ENCODE measurements at regions of chr17 and their contacts with region 1.

Region 1: DNA sequence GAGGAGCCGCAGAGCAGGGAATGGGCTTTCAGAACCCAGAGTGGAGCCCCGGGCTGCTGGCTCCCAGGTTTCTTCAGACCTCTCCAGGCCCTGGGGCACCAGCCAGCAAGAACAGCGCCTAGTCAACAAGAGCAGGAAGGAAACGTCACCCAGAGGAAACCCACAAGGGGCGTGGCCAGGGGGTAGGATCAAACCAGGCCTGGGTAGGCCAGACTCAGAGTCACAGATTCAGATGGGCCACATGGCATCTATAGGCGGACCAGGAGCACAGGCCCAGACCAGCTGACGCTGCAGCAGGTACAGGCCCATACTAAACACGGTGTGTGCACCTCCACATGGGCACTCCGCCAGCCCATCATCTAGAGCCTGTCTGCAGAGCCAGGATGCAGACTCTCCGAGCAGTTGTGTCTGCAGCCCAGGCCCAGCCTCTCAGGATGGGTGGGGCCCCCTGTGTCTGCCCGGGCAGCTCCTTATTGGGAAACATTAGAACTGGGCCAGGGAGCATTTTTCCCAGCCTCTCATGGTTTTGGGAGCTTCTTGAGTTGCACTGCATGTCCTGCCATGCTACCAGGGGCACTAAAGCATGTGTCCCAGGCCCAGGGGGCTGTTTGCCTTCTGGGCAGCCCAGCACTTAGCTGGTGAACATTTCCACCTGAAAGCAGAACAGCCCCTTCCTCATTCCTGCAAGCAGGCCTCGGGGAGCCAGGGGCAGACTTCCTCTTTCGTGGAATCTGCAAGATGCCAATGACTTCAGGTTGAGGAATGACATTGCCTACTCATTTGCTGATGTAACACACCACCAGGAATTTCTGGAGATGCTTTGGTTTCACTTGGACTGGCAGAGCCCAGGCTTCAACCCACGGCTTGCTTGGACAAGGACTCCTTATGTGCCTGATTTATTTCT is at the start of gene NLRP1:
- DNase-seq: peak; percentile 94 to 99 (median 95)
- H3K4me3 ChIP-seq: peak within 1 kb of the TSS; percentile 65 to 99
- H3K4me3 Mint-ChIP-seq: peak within 1 kb of the TSS; percentile 95 to 98 (median 97)
- H3K27ac ChIP-seq: peak within 1 kb of the TSS; percentile 88
- H3K27ac Mint-ChIP-seq: peak within 1 kb of the TSS; percentile 95 to 99 (median 98)
- H3K4me1 ChIP-seq: peaks cover 70% of the 10 kb centered on the region
- H3K4me1 Mint-ChIP-seq: peaks cover 41 to 86% (median 63%) of the 10 kb centered on the region in 4 donors
- H3K27me3 ChIP-seq: no peaks in the 10 kb centered on the region
- H3K27me3 Mint-ChIP-seq: no peaks in the 10 kb centered on the region
- total RNA-seq, gene NLRP1: 280 to 292 TPM

Region 2: DNA sequence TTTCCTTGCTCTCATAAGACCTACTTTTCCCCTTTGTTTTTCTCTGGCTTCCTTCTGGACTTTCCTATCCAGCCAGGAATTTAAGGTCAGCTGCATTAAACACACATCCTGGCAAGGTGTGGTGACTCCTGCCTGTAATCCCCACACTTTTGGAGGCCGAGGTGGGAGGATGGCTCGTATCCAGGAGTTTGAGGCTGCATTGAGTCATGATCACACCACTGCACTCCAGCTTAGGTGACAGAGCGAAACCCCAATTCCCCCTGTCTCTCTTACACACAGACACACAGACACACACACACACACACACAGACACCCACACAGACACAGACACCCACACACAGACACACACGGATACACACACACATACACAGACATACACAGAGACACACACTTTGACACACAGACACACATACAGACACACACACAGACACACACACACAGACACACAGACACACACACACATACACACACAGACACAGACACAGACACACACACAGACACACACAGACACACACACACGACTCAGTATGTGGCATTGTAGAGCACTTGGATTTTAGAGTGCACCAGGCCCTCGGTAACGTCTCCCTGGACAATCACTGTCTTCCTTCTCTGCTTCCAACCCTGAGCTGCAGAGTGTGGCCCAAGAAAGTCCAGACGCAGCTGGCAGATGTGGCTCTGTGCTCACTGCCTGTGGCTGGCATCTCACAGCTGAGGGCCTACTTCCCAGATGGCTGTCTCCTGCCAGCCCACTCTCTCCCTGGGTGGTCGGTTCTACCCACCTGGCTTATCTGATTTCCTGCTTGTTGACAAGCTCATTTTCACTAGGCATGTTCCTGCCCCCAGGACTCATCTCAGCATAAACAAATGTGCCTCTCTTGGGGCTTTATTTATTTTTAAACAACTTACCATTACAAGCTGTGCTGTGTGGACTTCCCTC is 39.3 kb before region 1 on chr17:
- CTCF ChIA-PET with region 1: no interaction called
- POLR2A ChIA-PET with region 1: no interaction called
- intact Hi-C with region 1: no loop called
- DNase-seq: no peak
- H3K4me3 ChIP-seq: no peak overlapping the region
- H3K4me3 Mint-ChIP-seq: no peak overlapping the region
- H3K27ac ChIP-seq: no peak overlapping the region
- H3K27ac Mint-ChIP-seq: peak overlapping the region in 6 of 7 donors; percentile 2 to 89 (median 28)
- H3K4me1 ChIP-seq: no peaks in the 10 kb centered on the region
- H3K4me1 Mint-ChIP-seq: peaks cover 9 to 23% (median 15%) of the 10 kb centered on the region in 4 donors
- H3K27me3 ChIP-seq: no peaks in the 10 kb centered on the region
- H3K27me3 Mint-ChIP-seq: no peaks in the 10 kb centered on the region

Region 3: DNA sequence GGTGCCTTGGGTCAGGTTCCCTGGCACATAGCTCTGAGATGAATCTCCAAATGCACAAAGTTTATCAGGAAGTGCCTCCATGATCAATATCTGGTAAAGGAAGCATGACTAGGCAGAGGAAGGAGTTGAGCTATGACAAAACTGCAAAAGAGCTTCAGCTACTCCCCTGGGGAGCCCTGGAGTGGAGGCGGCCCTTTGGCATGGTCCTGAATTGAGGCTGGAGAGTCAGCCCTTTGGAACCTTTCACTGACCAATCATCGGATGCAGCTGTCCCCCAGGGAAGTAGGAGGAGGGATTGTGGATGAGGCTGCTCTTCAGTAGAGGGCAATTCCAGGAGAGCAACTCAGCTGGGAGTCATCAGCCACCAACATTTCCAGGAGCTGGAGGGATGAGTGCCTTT is 45.8 kb after region 1 on chr17:
- CTCF ChIA-PET with region 1: no interaction called
- POLR2A ChIA-PET with region 1: no interaction called
- intact Hi-C with region 1: no loop called
- DNase-seq: no peak
- H3K4me3 ChIP-seq: no peak overlapping the region
- H3K4me3 Mint-ChIP-seq: no peak overlapping the region
- H3K27ac ChIP-seq: no peak overlapping the region
- H3K27ac Mint-ChIP-seq: no peak overlapping the region
- H3K4me1 ChIP-seq: no peaks in the 10 kb centered on the region
- H3K4me1 Mint-ChIP-seq: peaks cover 0 to 1% (median 0%) of the 10 kb centered on the region in 4 donors
- H3K27me3 ChIP-seq: no peaks in the 10 kb centered on the region
- H3K27me3 Mint-ChIP-seq: peaks cover 25 to 29% of the 10 kb centered on the region in 2 donors

Region 4: DNA sequence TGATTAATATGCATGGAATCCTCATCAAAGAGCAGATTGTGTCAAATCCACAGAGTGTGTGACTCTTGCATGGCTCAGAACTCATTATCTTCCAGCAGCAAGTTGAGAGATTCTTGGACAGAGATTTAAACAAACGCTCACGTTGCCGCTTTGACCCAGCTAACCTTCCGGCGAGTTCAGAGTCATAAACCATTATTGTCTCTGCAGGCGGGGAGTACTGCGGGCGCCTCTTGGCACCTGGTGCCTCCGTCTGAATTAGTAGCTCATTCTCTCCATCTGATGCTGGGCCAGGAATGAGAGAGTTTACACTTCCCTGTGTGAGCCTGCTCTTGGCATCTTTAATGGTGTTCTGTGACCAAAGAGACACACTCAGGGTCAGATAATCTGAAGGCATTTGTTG is 347.0 kb after region 1 on chr17:
- CTCF ChIA-PET with region 1: no interaction called
- POLR2A ChIA-PET with region 1: no interaction called
- intact Hi-C with region 1: no loop called
- DNase-seq: no peak
- H3K4me3 ChIP-seq: no peak overlapping the region
- H3K4me3 Mint-ChIP-seq: no peak overlapping the region
- H3K27ac ChIP-seq: no peak overlapping the region
- H3K27ac Mint-ChIP-seq: no peak overlapping the region
- H3K4me1 ChIP-seq: no peaks in the 10 kb centered on the region
- H3K4me1 Mint-ChIP-seq: no peaks in the 10 kb centered on the region
- H3K27me3 ChIP-seq: peaks cover 6% of the 10 kb centered on the region
- H3K27me3 Mint-ChIP-seq: peaks cover 13 to 17% of the 10 kb centered on the region in 2 donors

Region 5: GRCh38 chr17:6421700-6422604 is 837.3 kb after region 1 on chr17:
- CTCF ChIA-PET with region 1: interaction called, 20 read pairs
- POLR2A ChIA-PET with region 1: interaction called, 4 read pairs
- intact Hi-C with region 1: loop called (anchors 1 kb)
- DNase-seq: peak; percentile 53 to 62 (median 57)
- H3K4me3 ChIP-seq: no peak overlapping the region
- H3K4me3 Mint-ChIP-seq: no peak overlapping the region
- H3K27ac ChIP-seq: no peak overlapping the region
- H3K27ac Mint-ChIP-seq: peak overlapping the region in 1 of 7 donors; percentile 42
- H3K4me1 ChIP-seq: peaks cover 7% of the 10 kb centered on the region
- H3K4me1 Mint-ChIP-seq: peaks cover 2 to 11% (median 7%) of the 10 kb centered on the region in 4 donors
- H3K27me3 ChIP-seq: peaks cover 4% of the 10 kb centered on the region
- H3K27me3 Mint-ChIP-seq: peaks cover 2 to 14% of the 10 kb centered on the region in 2 donors

Region 6: GRCh38 chr17:6435968-6436367 is 851.3 kb after region 1 on chr17:
- CTCF ChIA-PET with region 1: interaction called, 59 read pairs
- POLR2A ChIA-PET with region 1: interaction called, 3 read pairs
- intact Hi-C with region 1: loop called (anchors 1 kb)
- DNase-seq: peak; percentile 52 to 67 (median 58)
- H3K4me3 ChIP-seq: no peak overlapping the region
- H3K4me3 Mint-ChIP-seq: no peak overlapping the region
- H3K27ac ChIP-seq: no peak overlapping the region
- H3K27ac Mint-ChIP-seq: no peak overlapping the region
- H3K4me1 ChIP-seq: no peaks in the 10 kb centered on the region
- H3K4me1 Mint-ChIP-seq: peaks cover 0 to 4% (median 0%) of the 10 kb centered on the region in 4 donors
- H3K27me3 ChIP-seq: peaks cover 4% of the 10 kb centered on the region
- H3K27me3 Mint-ChIP-seq: peaks cover 16 to 18% of the 10 kb centered on the region in 2 donors

Region 7: DNA sequence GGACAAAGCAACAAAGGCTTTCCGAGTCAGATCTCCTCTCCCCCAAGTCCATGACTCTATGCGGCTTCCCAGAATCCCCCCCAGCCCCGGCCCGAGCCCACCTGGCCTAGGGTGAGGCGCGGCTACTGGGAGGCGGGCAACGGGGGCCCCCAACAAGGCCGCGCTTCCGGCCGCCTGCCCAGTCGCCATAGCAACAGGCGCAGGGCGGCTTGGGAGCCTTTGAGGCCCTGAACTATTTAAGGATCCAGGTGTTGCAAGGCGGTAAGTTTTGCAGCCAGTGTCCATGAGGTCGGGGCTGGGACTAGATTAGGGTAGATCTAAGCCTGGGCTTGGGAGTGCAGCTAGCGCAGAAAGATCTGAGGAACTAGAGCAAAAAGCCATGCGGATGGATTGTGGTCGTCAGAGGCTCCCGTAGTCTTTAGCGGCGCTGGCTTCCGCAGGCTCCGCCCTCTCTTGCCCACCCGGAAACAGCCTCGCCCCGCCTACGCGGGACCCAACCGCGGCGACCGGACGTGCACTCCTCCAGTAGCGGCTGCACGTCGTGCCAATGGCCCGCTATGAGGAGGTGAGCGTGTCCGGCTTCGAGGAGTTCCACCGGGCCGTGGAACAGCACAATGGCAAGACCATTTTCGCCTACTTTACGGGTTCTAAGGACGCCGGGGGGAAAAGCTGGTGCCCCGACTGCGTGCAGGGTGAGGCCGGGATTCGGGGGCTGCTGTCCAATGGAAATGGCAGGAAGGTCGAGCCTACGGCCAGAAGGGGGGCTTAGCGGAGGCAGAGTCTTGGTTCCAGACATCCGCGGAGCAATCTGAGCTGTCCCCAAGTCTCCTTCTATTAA is 1056.1 kb after region 1 on chr17 and contains the starts of genes KIAA0753 and TXNDC17:
- CTCF ChIA-PET with region 1: no interaction called
- POLR2A ChIA-PET with region 1: no interaction called
- intact Hi-C with region 1: loop called (anchors 2 kb)
- DNase-seq: peak; percentile 85 to 91 (median 87)
- H3K4me3 ChIP-seq: peak within 1 kb of the TSS; percentile 74 to 94
- H3K4me3 Mint-ChIP-seq: peak within 1 kb of the TSS; percentile 95 to 98 (median 96)
- H3K27ac ChIP-seq: peak within 1 kb of the TSS; percentile 81
- H3K27ac Mint-ChIP-seq: peak within 1 kb of the TSS; percentile 96 to 99 (median 98)
- H3K4me1 ChIP-seq: peaks cover 40% of the 10 kb centered on the region
- H3K4me1 Mint-ChIP-seq: peaks cover 17 to 67% (median 43%) of the 10 kb centered on the region in 4 donors
- H3K27me3 ChIP-seq: no peaks in the 10 kb centered on the region
- H3K27me3 Mint-ChIP-seq: no peaks in the 10 kb centered on the region
- total RNA-seq, gene KIAA0753: 15.6 to 18.6 TPM
- total RNA-seq, gene TXNDC17: 17.0 to 27.1 TPM

Measured in CD4-positive, alpha-beta memory T cell (primary cell).